ENCODE measurements at regions of chr7 and their contacts with region 1.

Region 1: GRCh38 chr7:22110227-22110839 is 164.6 kb upstream of the CDCA7L start:
- DNase-seq: peak; percentile 49
- H3K4me3 ChIP-seq: no peak overlapping the region
- CTCF ChIP-seq: peak; percentile 78

Region 2: DNA sequence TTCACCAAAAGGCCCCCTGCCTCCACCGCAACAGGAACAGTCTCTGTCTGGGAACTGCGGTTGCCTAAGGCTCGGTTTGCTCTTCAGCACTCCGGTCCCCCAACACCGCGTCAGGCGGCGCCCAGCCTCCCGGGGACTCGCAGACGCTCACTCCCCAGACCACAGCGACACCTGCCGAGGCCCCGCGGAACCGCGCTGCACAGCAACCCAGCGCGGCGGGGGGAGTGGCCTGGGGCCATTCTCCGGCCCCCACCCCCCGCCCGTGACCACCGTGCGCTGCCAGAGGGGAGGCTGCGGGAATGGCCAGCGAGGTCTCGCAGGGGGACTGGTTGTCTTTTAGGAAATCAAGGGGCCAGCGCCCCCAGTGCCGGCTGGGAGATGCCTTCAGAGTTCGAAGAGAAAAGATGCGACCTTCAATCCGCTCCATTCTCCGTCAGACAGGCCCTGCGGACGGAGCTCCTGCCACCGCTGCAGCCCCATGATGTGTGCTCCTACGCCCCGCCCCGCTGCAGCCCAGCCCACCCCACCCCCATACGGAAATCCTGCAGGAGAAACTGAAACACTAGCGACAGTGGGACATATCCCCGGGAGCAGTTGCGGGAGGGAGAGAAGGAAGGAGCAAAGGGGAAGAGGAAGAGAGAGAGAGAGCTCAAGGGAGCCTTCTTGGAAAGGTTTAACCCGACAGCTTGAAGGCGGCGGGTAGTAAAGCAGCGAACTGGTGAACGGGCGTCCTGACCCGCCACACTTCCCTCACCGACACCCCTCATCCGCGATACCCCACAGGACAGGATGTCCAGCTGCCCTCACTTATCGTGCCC is 27.2 kb before region 1 on chr7:
- CTCF ChIA-PET with region 1: interaction called, 153 read pairs
- POLR2A ChIA-PET with region 1: no interaction called
- DNase-seq: no peak
- H3K4me3 ChIP-seq: peak overlapping the region; percentile 75
- CTCF ChIP-seq: peak; percentile 98

Region 3: DNA sequence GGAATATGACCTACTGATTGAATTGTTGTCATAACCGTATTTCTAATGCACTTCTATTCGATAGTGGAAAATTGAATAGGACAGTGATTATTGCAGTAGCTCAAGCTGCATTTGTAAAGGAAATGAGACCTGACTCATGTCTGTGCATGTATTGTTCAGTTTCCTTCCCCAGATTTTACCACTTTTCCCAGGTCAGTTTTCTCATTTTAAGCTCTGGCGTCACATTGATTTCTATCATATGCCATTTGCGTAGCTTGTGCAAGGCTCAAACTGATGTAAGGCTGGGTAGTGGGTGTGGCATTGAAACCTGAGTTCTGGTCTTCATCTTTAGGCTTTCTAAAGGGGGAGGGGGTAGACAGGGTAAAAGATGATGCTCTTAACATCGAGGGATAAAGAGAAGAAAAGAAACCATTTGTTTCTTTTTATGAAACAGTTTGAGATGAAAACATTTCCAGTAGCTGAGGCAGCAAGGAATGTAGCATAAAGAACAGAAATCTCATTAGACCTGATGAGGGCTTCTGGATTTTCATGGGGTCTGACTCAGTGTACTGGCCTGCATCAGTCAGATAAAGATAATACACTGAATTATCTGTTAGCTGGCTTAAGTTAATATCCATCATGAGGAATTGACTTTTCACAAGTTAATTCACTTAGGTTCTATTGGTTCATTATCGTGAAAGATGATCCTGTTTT is 17.6 kb after region 1 on chr7:
- CTCF ChIA-PET with region 1: interaction called, 44 read pairs
- POLR2A ChIA-PET with region 1: no interaction called
- DNase-seq: no peak
- H3K4me3 ChIP-seq: no peak overlapping the region
- CTCF ChIP-seq: no peak

Region 4: DNA sequence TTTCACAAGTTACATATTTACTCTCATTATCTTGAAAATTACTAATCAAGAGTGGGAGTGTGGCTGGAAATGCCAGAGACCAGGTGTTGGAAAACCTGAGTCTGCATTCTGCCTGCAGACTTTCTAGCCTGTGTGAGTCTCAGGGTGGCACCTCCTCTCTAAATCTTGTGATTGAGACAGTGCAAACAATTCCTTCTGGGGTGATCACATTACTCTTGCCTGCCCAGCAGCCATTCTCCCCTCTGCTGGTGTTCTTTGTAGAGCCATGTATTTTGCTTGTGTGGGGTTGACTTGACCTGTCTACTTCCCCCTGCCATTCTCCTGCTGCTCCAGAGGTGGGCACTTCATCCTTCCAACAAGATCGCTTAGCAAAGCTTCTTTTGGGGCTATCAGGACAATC is 145.5 kb after region 1 on chr7:
- CTCF ChIA-PET with region 1: interaction called, 40 read pairs
- POLR2A ChIA-PET with region 1: no interaction called
- DNase-seq: no peak
- H3K4me3 ChIP-seq: no peak overlapping the region
- CTCF ChIP-seq: no peak

Region 5: GRCh38 chr7:22452142-22452959 is 342.0 kb after region 1 on chr7:
- CTCF ChIA-PET with region 1: interaction called, 12 read pairs
- POLR2A ChIA-PET with region 1: no interaction called
- DNase-seq: no peak
- H3K4me3 ChIP-seq: peak overlapping the region; percentile 32
- CTCF ChIP-seq: peak; percentile 63

Region 6: DNA sequence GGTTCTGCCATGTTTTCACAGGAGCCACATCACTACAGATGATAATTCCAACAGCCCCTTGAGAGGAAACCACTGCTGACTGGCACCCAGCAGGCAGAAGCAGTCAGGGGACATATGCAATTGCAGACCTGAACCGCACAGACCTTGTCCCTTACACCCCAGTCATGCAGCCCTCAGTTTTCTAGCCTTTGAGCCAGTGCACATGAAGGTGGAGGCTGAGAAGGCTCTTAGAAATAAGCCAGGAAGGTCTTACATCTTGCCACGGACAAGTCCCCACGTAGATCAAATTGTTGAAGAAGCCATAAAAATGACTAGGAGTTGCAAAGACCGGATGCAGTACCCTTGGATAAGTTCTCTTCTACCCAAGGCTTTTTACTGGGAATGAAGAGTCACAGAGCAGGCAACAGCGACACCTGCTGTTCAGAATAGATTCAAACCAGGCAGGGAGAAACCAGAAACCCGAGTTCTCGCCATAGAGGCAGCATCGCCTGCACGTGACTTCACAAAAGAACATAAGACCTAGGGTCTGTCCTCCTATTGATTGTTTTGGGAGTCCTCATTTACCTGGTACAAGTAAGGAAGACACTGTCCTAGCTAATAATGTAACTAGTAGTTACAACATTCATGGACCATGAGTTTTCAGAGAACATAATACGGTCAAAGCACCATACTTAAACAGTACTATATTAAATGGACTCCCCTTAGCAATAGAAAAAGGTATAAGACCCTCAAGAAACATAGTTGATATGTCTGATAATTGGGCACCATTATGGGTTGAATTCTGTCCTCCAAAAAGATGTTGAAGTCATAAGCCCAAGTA is 378.5 kb after region 1 on chr7:
- CTCF ChIA-PET with region 1: interaction called, 232 read pairs
- POLR2A ChIA-PET with region 1: no interaction called
- DNase-seq: peak; percentile 26
- H3K4me3 ChIP-seq: no peak overlapping the region
- CTCF ChIP-seq: peak; percentile 65